Activated naive CD4-positive, alpha-beta T cell treated with anti-CD3 and anti-CD28 coated beads for 36 hours (primary cell): ENCODE measurements at regions of chr19 and their contacts with region 1.

Region 1: DNA sequence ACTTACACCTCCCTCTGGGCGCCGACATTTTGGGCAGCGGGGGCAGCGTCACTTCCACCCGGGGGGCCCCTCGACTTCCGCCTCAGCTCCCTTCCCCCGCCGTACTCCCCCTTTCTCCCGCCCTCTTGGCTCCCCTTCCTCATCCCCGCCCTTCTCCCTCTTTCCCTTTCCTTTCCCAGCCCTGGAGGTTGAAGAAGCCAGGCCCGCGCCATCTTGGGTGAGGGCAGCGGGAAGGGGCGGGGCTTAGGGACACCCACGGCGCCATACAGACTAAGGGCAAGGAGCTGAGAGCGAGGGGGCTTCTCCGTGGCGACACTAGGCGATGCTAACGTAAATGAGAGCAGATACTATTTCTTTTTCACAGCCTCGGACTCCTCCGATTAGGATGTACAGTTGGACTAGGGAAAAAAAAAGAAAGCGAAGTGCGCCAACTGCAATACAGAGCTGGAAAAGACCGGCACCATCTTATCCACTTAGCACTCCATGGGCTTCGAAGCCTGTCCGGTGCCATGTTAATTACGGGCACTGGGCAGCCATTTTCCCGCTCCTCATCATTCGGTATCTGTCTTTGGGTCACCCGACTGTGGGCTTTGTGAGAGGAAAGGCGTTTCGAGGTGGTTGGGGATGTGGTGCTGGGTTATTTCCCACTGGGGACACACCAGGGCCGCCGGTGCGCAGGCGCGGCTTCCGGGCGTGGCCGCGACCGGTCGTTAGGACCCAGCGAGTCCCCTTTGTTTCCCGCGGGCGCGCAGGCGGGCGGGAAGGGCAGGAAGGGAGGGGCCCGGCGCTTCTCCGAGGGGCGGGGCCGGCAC is at the start of gene FIZ1:
- DNase-seq: peak; percentile 98
- H3K4me3 Mint-ChIP-seq: peak within 1 kb of the TSS; percentile 88
- H3K27ac Mint-ChIP-seq: peak within 1 kb of the TSS; percentile 99
- H3K4me1 Mint-ChIP-seq: peaks cover 31% of the 10 kb centered on the region
- H3K27me3 Mint-ChIP-seq: no peaks in the 10 kb centered on the region
- total RNA-seq, gene FIZ1: 12.8 to 14.8 TPM

Region 2: DNA sequence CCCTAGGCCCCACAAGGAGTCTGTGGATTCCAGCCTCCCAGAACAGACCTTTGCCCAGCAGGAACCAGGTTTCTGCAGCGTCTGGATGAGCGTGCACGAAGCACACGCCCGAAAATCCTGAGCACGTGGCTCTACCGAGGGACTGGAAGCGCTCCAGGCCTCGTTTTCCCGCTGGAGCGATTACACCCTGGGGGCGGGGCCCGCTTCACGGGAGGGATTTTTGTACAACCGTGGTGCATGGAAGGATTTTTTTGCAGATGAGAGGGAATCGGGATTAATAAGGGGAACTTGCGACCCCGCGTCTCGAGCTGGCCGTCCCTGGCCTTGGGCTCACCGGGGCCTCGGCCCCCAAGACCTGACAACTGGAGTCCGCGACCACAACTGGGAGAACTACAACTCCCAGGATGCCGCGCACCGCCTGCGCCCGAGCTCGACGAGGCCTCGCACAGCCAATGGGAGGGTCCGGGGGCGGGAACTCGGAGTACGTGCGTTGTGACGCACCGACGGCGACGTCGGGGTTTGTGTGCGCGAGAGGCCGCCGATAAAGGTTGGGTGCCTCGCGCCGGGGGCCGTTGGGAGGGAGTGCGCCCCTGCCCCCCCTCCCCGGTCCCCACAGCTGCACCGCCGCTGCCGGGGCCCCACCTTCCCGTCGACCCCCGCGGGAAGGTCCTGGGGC is 123.4 kb before region 1 on chr19 and contains the start of gene ZNF628:
- CTCF ChIA-PET with region 1: no interaction called
- intact Hi-C with region 1: loop called (anchors 1 kb)
- DNase-seq: peak; percentile 99
- H3K4me3 Mint-ChIP-seq: peak within 1 kb of the TSS; percentile 90
- H3K27ac Mint-ChIP-seq: peak within 1 kb of the TSS; percentile 90
- H3K4me1 Mint-ChIP-seq: peaks cover 30% of the 10 kb centered on the region
- H3K27me3 Mint-ChIP-seq: no peaks in the 10 kb centered on the region
- total RNA-seq, gene ZNF628: 6.0 to 6.1 TPM

Region 3: DNA sequence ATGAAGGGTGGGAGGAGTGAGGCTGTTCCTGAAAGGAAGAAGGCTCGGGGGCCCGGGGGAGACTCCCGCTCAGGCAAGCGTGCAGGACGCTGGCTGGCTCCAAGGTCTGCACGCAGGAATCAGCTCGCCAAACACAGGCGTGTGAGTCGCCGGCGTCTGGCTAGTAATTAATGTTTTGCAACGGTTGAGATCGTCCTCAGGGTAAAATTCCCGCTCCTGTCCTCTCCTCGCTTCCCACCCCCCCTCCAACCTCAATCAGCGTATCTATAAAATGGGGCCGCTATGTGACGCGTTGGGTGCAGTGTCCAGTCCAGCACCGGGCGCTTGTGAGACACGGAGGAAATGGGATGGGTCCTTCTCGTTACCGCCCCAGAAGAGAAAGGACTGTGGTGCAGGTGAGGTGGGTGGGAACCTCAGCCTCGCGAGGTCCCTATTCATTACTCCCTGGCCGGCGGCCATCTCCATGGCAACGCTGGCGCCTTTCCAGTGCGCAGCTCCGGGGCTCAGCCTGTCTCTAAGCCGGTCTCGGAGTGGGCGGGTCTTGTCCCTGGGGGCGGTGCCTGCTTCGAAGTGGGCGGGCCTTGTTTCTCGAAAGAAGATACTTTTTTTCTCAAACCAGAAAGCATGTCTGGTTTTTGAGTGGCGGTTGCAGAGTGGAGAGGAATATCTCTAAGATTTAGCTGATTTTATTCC is 12.6 kb before region 1 on chr19:
- CTCF ChIA-PET with region 1: interaction called, 4 read pairs
- intact Hi-C with region 1: loop called (anchors 1 kb)
- DNase-seq: peak; percentile 98
- H3K4me3 Mint-ChIP-seq: peak overlapping the region; percentile 77
- H3K27ac Mint-ChIP-seq: no peak overlapping the region
- H3K4me1 Mint-ChIP-seq: peaks cover 25% of the 10 kb centered on the region
- H3K27me3 Mint-ChIP-seq: no peaks in the 10 kb centered on the region

Region 4: GRCh38 chr19:55632463-55632834 is 32.8 kb after region 1 on chr19:
- CTCF ChIA-PET with region 1: interaction called, 11 read pairs
- intact Hi-C with region 1: no loop called
- DNase-seq: peak; percentile 98
- H3K4me3 Mint-ChIP-seq: no peak overlapping the region
- H3K27ac Mint-ChIP-seq: peak overlapping the region; percentile 60
- H3K4me1 Mint-ChIP-seq: peaks cover 36% of the 10 kb centered on the region
- H3K27me3 Mint-ChIP-seq: no peaks in the 10 kb centered on the region

Region 5: DNA sequence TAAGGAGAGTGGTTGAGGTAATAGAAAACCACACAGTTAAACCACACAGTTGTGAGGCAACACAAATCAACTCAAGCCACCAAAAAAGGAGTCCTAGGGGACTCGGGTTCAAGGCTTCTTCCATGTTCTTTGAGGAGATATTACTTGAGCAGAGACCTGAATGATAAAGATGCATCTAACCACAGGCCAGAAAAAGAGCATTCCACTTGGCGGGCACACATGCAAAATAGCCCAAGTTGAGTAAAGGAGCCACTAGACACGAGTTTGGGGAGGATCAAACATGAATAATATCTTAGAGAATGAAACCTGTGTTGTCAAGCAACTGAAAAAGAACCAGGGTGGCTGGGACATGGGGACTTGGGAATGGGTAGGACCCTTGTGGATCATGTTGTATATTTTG is 266.8 kb after region 1 on chr19:
- CTCF ChIA-PET with region 1: no interaction called
- intact Hi-C with region 1: no loop called
- DNase-seq: no peak
- H3K4me3 Mint-ChIP-seq: no peak overlapping the region
- H3K27ac Mint-ChIP-seq: no peak overlapping the region
- H3K4me1 Mint-ChIP-seq: no peaks in the 10 kb centered on the region
- H3K27me3 Mint-ChIP-seq: peaks cover 10% of the 10 kb centered on the region